ENCODE measurements at regions of chr10 and their contacts with region 1.

Region 1: DNA sequence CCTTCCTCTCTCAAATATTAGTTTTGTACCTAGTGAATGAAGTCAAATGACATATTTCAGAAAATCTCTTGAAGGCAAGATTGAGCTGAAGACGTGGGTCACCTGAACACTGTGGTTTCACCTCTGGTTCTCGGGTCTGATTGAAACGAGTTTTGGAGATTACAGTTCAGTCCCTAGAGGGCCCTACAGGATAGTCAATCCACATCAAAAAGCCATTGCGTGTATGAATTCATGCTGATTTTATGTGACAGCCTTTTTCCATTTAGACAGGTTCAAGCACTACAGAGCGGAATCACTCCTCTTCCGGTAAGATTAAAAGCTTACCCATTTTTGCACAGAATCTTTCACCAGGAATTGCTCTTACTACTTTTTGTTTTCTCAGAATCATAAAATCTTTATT is 62.2 kb downstream of the VIM start:
- DNase-seq: no peak
- ATAC-seq: no peak

Region 2: DNA sequence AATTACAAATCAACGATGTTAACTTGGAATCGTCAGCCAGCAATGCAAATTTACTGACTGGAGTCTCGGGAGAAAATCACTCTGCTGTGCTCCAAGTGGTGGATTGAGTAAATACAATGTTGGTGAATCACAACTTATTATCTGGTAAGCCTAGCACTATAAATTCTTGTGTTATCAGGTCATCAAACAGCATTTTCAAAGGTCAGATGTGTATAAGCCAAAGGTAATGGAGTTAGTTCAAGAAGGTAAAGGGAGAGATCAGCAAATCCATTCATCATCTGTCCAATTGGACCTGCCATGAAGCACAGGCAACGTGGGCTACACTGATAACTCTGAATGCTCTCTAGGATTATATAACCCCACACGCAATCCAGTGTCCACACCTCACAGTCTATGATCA is 174.5 kb before region 1 on chr10:
- intact Hi-C with region 1: no loop called
- DNase-seq: no peak
- ATAC-seq: no peak

Region 3: DNA sequence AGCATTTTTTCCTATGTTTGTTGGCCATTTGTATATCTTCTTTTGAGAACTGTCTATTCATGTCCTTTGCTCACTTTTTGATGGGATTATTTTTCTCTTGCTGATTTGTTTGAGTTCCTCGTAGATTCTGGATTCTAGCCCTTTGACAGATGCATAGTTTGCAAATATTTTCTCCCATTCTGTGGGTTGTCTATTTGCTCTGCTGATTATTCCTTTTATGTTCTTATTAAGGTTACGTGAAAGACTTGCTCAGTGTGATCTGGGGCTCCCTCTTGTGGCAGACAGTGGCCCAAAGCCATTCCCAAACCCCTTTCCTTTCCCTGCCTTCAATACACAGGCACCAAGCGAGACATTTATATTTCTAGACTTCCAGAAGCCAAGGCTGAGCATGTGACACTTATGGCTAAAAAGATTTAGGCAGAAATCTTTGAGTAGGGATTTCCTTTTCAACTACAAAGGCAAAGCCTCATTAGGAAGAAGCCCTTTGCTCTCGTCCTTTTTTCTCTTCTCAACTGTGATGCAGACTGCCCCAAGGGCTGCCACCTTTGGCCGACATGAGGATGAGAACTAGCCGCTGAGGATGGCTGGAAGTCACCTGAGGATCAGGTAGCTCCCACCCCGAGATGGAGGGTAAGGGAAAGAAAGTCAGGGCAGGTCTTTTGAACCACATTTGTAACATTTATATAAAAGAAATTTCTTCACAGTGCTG is 140.6 kb after region 1 on chr10:
- intact Hi-C with region 1: loop called (anchors 10 kb)
- DNase-seq: no peak
- ATAC-seq: peak; percentile 64